ENCODE measurements at regions of chr7 and their contacts with region 1.

Region 1: GRCh38 chr7:131107337-131108211 is 220.1 kb upstream of the MKLN1 start:
- DNase-seq: peak; percentile 83
- H3K4me3 Mint-ChIP-seq: peak overlapping the region; percentile 94
- H3K27ac Mint-ChIP-seq: peak overlapping the region; percentile 97
- H3K4me1 Mint-ChIP-seq: peaks cover 53% of the 10 kb centered on the region
- H3K27me3 Mint-ChIP-seq: no peaks in the 10 kb centered on the region

Region 2: DNA sequence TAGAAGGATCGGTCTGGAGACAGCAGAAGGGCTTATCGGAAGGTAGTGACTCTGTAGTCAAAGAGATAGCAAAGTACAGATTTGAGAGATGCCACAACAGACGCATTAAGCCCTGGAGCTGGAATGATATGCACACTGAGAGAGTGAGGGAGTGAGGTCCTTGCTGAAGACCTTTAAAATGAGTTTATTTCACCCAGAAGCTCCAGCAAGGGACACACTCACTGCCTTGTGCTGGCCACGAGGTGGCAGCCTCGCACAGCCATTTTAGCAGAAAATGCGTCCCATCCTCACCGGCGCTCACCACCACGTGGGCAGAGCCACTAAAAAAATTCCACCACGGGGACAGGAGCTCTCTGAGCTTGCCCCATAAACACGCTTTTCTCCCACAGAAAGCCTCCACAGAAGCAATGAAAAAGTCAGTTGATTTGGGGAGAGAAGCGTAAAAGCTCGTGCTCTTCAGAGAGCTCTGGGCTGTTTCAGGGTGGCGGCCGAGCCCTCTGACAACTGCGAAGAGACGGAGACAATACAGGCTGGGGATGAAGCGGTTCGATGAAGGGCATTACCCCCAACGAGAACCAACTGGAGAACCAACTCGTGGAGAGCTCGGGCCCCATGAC is 210.6 kb before region 1 on chr7:
- CTCF ChIA-PET with region 1: interaction called, 3 read pairs
- POLR2A ChIA-PET with region 1: interaction called, 4 read pairs
- intact Hi-C with region 1: loop called (anchors 5 kb)
- DNase-seq: peak; percentile 84
- H3K4me3 Mint-ChIP-seq: peak overlapping the region; percentile 43
- H3K27ac Mint-ChIP-seq: peak overlapping the region; percentile 89
- H3K4me1 Mint-ChIP-seq: peaks cover 95% of the 10 kb centered on the region
- H3K27me3 Mint-ChIP-seq: peaks cover 6% of the 10 kb centered on the region

Region 3: DNA sequence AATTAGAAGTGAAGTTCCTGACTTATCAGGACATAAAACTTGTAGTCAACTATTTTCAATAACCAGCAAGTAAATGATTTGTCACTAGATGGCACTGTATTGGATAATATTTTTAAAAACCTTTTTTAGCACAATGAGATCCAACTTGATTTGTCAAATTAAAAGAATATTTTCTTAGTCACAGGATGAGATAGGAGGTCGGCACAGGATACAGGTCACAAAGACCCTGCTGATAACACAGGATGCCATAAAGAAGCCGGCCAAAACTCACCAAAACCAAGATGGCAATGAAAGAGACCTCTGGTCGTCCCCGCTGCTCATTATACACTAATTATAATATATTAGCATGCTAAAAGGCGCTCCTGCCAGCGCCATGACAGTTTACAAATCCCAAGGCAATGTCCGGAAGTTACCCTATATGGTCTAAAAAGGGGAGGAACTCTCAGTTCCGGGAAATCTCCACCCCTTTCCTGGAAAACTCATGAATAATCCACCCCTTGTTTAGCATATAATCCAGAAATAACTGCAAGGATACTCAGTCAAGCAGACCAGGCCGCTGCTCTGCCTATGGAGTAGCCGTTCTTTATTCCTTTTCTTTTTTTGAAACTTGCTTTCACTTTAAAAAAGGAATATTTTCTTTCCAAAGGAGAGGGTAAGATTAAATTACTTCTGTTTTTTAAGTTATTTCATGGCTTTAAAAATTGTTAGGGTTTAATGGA is 35.6 kb before region 1 on chr7:
- CTCF ChIA-PET with region 1: interaction called, 8 read pairs
- POLR2A ChIA-PET with region 1: interaction called, 3 read pairs
- intact Hi-C with region 1: loop called (anchors 1 kb)
- DNase-seq: peak; percentile 31
- H3K4me3 Mint-ChIP-seq: no peak overlapping the region
- H3K27ac Mint-ChIP-seq: peak overlapping the region; percentile 70
- H3K4me1 Mint-ChIP-seq: peaks cover 83% of the 10 kb centered on the region
- H3K27me3 Mint-ChIP-seq: no peaks in the 10 kb centered on the region

Region 4: DNA sequence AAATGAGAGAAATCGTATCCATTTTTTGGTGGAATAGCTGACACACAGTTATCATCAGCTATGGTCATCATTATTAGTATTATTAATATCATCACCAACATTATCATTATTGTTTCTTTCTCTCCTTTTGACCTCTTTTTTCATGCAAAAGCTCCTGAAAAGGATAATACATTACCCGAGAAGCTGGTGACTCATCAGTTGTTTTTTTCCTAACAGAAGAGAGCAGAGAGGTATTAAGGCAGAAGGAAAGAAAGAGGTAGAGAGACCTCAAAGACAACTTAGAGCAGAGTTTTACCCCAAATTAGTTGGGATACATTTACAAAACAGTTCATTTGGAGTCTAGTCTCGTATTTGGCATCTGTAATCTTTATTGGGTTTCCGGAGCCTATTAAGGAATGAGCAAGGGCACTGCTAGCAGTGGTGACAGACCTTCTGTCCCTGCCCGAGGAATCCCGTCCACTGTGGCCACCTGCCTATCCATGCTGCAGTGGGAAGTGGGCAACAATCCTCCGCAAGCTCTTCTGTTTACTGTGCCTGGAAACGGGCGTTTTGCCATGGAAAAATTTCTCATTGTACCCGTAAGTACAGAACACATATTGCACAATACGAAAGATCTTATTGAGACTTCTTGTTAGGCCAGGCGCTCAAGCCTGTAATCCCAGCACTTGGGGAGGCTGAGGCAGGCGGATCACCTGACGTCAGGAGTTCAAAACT is 50.1 kb after region 1 on chr7:
- CTCF ChIA-PET with region 1: no interaction called
- POLR2A ChIA-PET with region 1: no interaction called
- intact Hi-C with region 1: no loop called
- DNase-seq: no peak
- H3K4me3 Mint-ChIP-seq: no peak overlapping the region
- H3K27ac Mint-ChIP-seq: no peak overlapping the region
- H3K4me1 Mint-ChIP-seq: no peaks in the 10 kb centered on the region
- H3K27me3 Mint-ChIP-seq: no peaks in the 10 kb centered on the region

Region 5: DNA sequence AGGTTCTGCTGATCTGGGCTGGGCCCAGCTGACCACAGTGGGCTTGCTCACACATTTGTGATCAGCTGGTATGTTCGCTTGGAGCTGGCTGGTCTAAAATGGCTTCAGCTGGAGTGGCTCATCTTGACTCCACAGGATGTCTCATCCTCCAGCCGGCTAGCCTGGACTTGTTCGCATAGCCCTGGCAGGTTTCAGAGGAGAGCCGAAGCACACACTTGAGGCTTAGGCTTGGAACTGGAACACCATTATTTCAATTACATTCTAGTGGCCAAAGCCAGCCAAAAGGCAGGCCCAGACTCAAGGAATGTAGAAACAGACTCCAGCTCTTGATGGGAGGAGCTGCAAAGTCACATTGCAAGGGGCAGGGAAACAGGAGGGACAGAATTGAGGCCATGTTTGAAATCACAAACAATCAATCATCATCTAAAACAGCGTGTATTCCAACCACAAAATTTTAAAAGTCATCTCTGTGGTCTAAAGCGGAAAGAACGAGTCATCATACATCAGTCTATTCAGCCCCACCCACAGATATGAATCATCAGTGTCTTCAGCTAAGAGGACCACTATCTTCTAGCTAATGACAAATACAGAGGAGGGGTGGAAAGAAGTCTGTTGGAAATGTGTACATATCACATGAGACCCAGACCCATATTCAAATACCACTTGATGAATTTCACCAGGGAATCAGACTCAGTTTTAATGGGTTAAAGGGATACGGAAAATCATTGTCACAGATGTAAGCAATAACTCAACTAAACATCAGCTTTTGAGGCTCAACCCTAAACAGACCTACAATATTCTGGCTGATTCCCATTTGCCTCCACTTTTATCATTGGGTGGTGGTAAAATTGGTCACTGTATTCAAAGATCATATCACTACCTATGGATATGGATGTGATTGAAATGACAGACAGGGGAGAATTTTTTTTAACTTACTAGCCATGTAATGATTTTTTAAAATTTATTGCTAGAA is 81.1 kb after region 1 on chr7:
- CTCF ChIA-PET with region 1: interaction called, 7 read pairs
- POLR2A ChIA-PET with region 1: interaction called, 26 read pairs
- intact Hi-C with region 1: loop called (anchors 1 kb)
- DNase-seq: peak; percentile 68
- H3K4me3 Mint-ChIP-seq: peak overlapping the region; percentile 45
- H3K27ac Mint-ChIP-seq: peak overlapping the region; percentile 90
- H3K4me1 Mint-ChIP-seq: peaks cover 54% of the 10 kb centered on the region
- H3K27me3 Mint-ChIP-seq: no peaks in the 10 kb centered on the region

Region 6: GRCh38 chr7:131302876-131303707 is 195.5 kb after region 1 on chr7:
- CTCF ChIA-PET with region 1: interaction called, 3 read pairs
- POLR2A ChIA-PET with region 1: no interaction called
- intact Hi-C with region 1: loop called (anchors 5 kb)
- DNase-seq: peak; percentile 32
- H3K4me3 Mint-ChIP-seq: no peak overlapping the region
- H3K27ac Mint-ChIP-seq: no peak overlapping the region
- H3K4me1 Mint-ChIP-seq: peaks cover 6% of the 10 kb centered on the region
- H3K27me3 Mint-ChIP-seq: no peaks in the 10 kb centered on the region

Region 7: DNA sequence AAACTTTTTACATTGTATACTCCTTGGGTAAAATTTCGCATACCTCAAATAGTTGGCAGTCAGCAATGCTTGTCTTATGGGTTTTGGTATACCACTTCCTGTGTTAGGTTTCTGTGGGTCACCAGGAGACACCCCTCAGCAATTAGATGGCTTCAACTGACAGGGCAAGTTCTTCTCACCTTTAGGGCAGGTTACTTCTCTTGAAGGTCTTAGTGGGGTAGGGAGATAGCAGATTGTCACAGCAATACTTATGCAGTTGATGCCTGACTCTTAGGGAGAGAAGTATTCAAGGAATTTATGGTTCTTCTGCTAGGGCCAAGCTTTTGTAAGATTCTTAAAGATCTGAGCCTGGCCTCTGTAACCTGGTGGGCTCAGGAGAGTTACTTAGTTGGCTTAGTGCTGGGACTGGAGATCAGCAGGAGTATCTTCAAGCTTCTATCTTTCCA is 263.0 kb after region 1 on chr7:
- CTCF ChIA-PET with region 1: no interaction called
- POLR2A ChIA-PET with region 1: no interaction called
- intact Hi-C with region 1: loop called (anchors 1 kb)
- DNase-seq: peak; percentile 40
- H3K4me3 Mint-ChIP-seq: no peak overlapping the region
- H3K27ac Mint-ChIP-seq: no peak overlapping the region
- H3K4me1 Mint-ChIP-seq: peaks cover 69% of the 10 kb centered on the region
- H3K27me3 Mint-ChIP-seq: no peaks in the 10 kb centered on the region